ENCODE measurements at regions of chr2 and their contacts with region 1.

Region 1: GRCh38 chr2:100677611-100678185 is 114.9 kb downstream of the PDCL3 start:
- DNase-seq: no peak
- ATAC-seq: no peak
- H3K4me3 ChIP-seq: no peak overlapping the region
- H3K27ac ChIP-seq: no peak overlapping the region
- H3K4me1 ChIP-seq: no peaks in the 10 kb centered on the region
- H3K27me3 ChIP-seq: no peaks in the 10 kb centered on the region
- CTCF ChIP-seq: no peak

Region 2: GRCh38 chr2:99653433-99653832 is 1024.3 kb before region 1 on chr2:
- CTCF ChIA-PET with region 1: interaction called, 13 read pairs
- POLR2A ChIA-PET with region 1: no interaction called
- intact Hi-C with region 1: no loop called
- DNase-seq: no peak
- ATAC-seq: no peak
- H3K4me3 ChIP-seq: no peak overlapping the region
- H3K27ac ChIP-seq: no peak overlapping the region
- H3K4me1 ChIP-seq: no peaks in the 10 kb centered on the region
- H3K27me3 ChIP-seq: no peaks in the 10 kb centered on the region
- CTCF ChIP-seq: no peak

Region 3: GRCh38 chr2:100142393-100142792 is 535.3 kb before region 1 on chr2 and contains the start of gene AFF3:
- CTCF ChIA-PET with region 1: no interaction called
- POLR2A ChIA-PET with region 1: no interaction called
- intact Hi-C with region 1: no loop called
- DNase-seq: no peak
- ATAC-seq: no peak
- H3K4me3 ChIP-seq: no peak within 1 kb of the TSS
- H3K27ac ChIP-seq: no peak within 1 kb of the TSS
- H3K4me1 ChIP-seq: no peaks in the 10 kb centered on the region
- H3K27me3 ChIP-seq: no peaks in the 10 kb centered on the region
- CTCF ChIP-seq: no peak
- total RNA-seq, gene AFF3: 0.04 and 0.06 TPM in 2 replicates

Region 4: DNA sequence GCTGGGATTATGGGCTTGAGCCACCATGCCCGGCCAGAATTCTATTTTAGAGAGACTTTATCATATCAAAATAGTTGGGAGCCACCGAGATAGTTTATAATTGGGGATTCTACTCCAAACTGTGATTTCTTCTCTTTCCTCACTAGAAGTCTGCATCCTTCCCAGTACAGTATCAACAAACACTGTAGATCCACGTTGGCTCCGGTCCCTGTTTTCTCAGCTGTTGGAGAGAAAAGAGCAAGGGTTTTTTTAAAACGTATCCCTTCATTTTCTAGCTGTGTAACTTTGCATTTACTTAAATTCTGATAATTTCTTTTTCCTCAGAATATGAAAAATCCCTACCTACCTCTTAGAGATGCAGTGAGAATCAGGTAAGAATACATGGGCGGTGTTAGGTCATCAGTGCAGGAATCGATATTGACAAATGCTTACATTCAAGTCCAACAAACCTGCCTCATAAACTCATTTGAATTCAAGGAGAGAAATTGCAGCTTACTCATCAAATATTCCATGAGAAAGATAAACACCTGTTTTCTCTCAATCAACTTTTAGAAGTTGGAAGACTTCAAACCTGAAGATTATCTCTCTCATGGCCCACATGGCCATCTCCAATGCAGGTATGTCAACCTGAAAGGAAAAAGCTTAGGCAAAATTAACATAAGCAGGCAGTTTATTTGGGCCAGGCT is 132.6 kb before region 1 on chr2:
- CTCF ChIA-PET with region 1: no interaction called
- POLR2A ChIA-PET with region 1: no interaction called
- intact Hi-C with region 1: no loop called
- DNase-seq: no peak
- ATAC-seq: no peak
- H3K4me3 ChIP-seq: no peak overlapping the region
- H3K27ac ChIP-seq: no peak overlapping the region
- H3K4me1 ChIP-seq: no peaks in the 10 kb centered on the region
- H3K27me3 ChIP-seq: no peaks in the 10 kb centered on the region
- CTCF ChIP-seq: no peak

Region 5: DNA sequence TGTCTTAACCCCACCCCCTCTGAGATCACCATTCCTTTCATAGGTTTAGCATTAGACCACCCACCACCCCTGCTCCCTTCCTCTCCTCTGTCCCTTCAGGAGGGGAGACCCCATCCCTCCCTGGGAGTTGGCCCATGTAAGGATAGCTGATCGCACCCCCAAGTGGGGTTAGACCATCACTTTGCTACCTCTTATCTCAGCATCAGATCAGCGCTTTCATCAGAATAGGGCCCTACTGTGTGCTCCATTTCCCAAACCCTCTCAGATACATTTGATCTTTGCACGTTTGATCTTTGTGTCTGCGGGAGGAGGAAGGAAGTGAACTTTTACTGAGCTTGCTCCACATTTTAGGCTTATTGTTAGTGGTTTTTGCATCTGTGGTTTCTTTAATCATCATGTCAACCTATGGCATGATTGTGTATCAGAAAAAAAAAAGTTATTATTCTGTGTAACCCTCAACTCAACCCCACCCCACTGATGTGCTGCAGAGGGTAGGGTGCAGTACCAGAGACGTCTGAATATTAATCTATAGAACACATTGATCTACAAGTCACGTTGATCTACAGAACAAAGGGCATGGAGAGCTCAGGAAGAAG is 33.7 kb before region 1 on chr2:
- CTCF ChIA-PET with region 1: no interaction called
- POLR2A ChIA-PET with region 1: no interaction called
- intact Hi-C with region 1: no loop called
- DNase-seq: no peak
- ATAC-seq: no peak
- H3K4me3 ChIP-seq: no peak overlapping the region
- H3K27ac ChIP-seq: no peak overlapping the region
- H3K4me1 ChIP-seq: no peaks in the 10 kb centered on the region
- H3K27me3 ChIP-seq: no peaks in the 10 kb centered on the region
- CTCF ChIP-seq: no peak